ENCODE measurements at regions of chr7 and their contacts with region 1.

Region 1: DNA sequence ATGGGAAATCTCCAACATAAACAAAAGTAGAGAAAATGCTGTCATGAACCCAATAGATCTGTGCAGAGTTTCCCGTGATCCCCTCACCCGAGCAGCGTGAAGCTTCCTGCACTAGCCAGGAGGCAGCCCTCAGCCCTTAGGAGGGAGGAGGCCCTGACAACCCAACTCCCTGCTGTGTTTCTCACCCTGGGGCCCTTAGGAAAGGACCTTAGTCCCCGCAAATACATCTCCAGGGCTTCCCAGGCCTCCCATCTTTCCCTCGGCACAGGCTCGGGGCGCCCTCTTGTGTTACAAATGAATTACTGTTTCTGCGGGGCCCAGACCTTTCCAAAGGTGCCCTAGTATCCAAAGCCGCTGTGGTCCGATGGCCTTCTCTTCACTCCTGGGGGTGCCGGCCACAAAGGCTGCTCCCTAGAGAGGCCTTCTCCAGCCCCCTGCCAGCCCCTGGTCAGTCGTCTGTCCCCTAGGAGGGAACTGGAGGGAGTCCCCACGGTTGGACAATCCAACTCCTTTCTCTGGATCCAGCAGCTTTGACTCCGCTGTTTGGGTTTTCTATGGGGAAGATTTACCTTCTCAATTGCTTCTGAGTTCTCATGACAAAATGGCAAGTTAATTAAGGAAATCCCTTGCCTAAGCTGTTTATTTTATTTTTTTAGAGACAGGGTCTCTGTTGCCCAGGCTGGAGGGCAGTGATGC is 49.9 kb upstream of the SH2B2 start:
- DNase-seq: peak; percentile 22
- H3K4me3 Mint-ChIP-seq: no peak overlapping the region
- H3K27ac Mint-ChIP-seq: no peak overlapping the region
- H3K4me1 Mint-ChIP-seq: no peaks in the 10 kb centered on the region
- H3K27me3 Mint-ChIP-seq: no peaks in the 10 kb centered on the region

Region 2: GRCh38 chr7:101542527-101543241 is 694.1 kb before region 1 on chr7:
- intact Hi-C with region 1: loop called (anchors 1 kb)
- DNase-seq: peak; percentile 48
- H3K4me3 Mint-ChIP-seq: no peak overlapping the region
- H3K27ac Mint-ChIP-seq: no peak overlapping the region
- H3K4me1 Mint-ChIP-seq: no peaks in the 10 kb centered on the region
- H3K27me3 Mint-ChIP-seq: no peaks in the 10 kb centered on the region

Region 3: GRCh38 chr7:101602484-101603241 is 634.1 kb before region 1 on chr7:
- intact Hi-C with region 1: loop called (anchors 1 kb)
- DNase-seq: peak; percentile 44
- H3K4me3 Mint-ChIP-seq: no peak overlapping the region
- H3K27ac Mint-ChIP-seq: no peak overlapping the region
- H3K4me1 Mint-ChIP-seq: no peaks in the 10 kb centered on the region
- H3K27me3 Mint-ChIP-seq: no peaks in the 10 kb centered on the region

Region 4: GRCh38 chr7:101669307-101669706 is 567.4 kb before region 1 on chr7:
- intact Hi-C with region 1: loop called (anchors 1 kb)
- DNase-seq: no peak
- H3K4me3 Mint-ChIP-seq: no peak overlapping the region
- H3K27ac Mint-ChIP-seq: no peak overlapping the region
- H3K4me1 Mint-ChIP-seq: no peaks in the 10 kb centered on the region
- H3K27me3 Mint-ChIP-seq: peaks cover 2% of the 10 kb centered on the region

Region 5: DNA sequence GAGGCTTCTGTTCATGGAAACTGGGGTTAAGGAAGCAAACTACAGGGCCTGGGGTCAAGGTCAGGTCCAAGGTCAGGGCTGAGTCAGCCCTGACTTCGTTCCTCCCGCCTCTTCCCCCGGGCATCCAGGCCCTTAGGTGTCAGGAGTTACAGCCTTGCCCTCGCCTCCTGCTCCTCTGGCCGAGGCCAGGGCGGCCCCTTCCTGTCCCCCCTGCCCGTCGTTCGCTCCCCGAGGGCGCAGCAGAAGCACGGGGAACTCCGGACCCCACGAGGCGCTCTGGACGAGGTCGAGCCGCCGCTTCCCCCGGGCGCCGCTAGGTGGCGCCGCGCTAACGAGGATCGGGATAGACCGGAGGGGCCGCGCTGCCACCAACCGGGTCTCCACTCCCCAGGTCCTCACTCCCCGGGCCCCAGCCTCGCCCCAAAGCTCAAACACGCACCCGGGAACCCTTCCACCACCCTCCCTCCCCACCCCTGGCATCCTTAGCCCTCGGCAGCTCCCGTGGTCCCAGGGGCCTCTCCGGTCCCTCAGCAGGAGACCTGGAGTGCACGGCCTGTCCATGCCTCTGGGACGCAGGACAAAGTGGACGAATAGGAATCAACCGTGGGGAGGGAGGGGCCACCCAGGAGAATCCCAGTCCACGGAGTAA is 548.4 kb before region 1 on chr7:
- intact Hi-C with region 1: loop called (anchors 1 kb)
- DNase-seq: peak; percentile 67
- H3K4me3 Mint-ChIP-seq: no peak overlapping the region
- H3K27ac Mint-ChIP-seq: no peak overlapping the region
- H3K4me1 Mint-ChIP-seq: peaks cover 6% of the 10 kb centered on the region
- H3K27me3 Mint-ChIP-seq: peaks cover 5% of the 10 kb centered on the region

Region 6: GRCh38 chr7:102044984-102045673 is 191.6 kb before region 1 on chr7:
- intact Hi-C with region 1: no loop called
- DNase-seq: no peak
- H3K4me3 Mint-ChIP-seq: no peak overlapping the region
- H3K27ac Mint-ChIP-seq: no peak overlapping the region
- H3K4me1 Mint-ChIP-seq: no peaks in the 10 kb centered on the region
- H3K27me3 Mint-ChIP-seq: no peaks in the 10 kb centered on the region

Region 7: DNA sequence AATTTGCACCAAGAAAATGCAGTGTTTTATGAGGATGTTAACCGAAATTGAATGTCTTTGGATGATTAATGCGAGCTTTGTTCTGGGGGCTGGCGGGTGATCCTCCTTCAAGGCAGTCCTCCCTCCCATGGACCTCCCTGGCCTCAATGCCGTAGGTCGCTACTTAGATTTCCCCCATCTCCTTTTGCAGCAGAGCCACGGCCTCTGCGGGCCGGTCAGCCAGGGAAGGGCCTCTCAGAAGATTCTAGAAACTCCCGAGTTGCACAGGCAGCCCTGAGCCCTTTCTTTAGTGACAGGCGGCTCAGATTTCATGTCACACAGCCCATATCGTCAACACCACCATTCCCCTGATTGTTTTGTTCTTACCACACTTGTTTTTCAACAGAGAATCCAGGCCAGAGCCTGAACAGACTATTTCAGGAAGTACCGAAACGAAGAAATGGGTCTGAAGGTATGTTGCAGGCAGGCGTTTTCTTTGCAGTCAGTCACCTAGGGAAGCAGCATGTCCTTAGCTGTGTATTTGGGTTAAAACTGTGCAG is 38.3 kb before region 1 on chr7:
- intact Hi-C with region 1: no loop called
- DNase-seq: no peak
- H3K4me3 Mint-ChIP-seq: no peak overlapping the region
- H3K27ac Mint-ChIP-seq: no peak overlapping the region
- H3K4me1 Mint-ChIP-seq: no peaks in the 10 kb centered on the region
- H3K27me3 Mint-ChIP-seq: no peaks in the 10 kb centered on the region

Region 8: DNA sequence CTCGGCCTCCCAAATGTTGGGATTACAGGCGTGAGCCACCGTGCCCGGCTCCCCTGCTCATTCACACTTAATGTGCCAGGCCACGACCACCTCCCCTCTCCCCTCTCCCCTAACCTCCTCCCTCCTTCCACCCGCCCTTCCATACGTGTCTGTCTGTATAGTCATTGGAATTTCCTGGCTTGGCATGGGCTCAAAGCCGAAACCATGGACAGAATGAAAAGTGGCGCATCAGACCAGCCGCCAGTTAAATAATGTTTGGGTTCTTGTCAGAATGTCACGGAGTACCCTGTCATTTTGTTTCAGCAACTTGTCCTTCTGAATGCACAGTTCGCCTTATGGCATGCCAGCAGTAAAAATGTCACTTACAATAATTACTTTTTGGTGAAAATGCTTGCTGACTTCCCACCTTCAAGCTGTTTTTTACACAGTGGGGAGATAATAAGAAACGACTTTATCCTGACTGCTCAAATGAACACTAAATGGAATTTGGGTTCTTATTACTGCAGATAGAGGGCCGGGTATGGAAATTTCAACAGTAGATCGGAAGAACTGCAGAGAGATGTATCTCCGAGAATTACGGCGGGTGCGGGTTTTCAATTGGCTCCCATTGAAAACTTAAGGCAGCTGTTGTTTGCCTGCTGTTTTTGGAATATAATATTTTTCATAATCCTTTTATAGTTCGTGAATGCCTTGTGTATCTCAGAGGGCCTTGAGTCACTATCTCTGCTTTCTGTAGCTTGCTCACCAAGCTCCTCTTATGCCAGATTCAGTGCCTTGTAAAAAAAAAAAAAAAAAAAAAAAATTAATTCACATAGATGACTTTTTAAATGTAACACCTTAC is 15.6 kb before region 1 on chr7:
- intact Hi-C with region 1: no loop called
- DNase-seq: no peak
- H3K4me3 Mint-ChIP-seq: no peak overlapping the region
- H3K27ac Mint-ChIP-seq: no peak overlapping the region
- H3K4me1 Mint-ChIP-seq: peaks cover 5% of the 10 kb centered on the region
- H3K27me3 Mint-ChIP-seq: no peaks in the 10 kb centered on the region